OCI-LY7 (cell line): ENCODE measurements at regions of chr5 and their contacts with region 1.

Region 1: DNA sequence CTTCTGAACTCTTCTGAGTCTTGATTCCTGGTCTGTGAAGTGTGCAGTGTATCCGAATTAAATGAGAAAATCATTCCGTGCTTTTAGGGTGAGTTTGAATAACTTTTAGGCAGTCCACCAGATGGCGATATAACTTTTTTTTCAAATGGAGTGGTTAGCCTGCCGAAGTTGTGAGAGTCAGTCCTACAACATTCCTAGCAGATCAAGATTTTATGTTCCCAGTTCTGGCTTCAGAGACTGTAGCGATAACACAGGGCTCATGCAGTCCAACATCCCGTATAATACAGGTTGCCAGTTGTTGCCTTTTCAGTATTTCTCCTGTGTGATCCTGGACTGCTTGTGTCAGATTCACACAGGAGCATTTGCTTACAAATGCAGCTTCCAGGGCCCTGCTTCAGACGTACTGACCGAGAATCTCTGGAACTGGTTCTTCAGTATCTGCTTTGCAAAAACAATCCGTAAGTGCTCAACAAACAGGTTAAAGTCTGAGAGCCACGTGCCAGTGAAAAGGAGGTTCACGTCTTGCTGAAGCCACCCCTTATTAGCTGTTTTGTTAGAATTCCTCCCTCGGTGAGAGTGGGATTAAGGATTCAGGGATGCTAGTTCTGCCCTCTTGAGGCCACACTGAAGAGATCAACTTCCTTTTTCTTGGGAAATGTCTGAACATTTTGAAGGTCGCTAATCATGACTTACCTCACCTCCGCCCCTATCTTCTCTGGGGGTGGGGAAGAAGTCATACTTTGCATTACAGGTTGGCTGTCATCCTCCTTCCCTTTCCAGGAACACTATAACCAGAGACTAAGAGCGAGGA is 22.8 kb downstream of the SMIM3 start:
- DNase-seq: peak; percentile 49
- H3K4me3 ChIP-seq: no peak overlapping the region
- H3K27ac ChIP-seq: no peak overlapping the region
- H3K4me1 ChIP-seq: no peaks in the 10 kb centered on the region
- CTCF ChIP-seq: peak; percentile 81

Region 2: DNA sequence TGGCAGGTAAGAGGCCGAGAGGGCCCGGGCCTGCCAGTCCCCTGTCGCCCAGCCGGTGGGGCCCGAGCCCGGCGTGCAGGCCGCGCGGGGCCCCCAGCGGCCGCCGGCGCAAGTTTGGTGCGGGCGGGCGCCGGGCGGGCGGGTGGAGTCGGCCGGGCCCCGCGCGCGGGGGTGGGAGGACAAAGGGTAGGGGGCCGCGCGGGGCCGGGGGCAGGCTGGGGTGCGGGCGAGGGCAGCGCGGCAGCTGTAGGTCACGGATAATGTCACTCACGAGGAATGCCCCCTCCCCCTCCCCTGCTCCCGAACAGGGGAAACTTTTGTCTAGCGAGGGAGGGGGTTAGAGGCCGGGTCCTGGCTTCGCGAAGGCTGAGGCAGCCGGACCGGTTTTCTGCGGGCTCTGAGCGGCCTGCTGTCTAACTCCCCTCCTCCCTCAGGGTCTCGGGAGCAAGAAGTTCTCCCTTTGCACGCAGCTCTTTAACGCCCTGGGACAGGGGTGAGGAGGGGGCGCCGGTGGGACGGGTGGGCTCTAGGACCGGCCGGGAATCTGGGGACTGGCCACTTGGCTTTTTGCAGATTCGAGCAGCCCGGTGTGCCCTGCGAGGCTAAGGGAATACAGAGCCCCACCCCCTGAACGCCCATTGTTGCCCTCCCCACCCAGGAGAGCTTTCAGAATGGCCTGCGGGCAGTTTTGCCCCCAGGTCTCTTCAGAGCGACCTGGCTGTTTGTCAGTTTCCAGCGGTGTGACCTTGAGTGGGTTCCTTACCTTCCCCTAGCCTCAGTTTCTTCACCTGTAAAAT is 314.7 kb before region 1 on chr5:
- CTCF ChIA-PET with region 1: no interaction called
- POLR2A ChIA-PET with region 1: no interaction called
- intact Hi-C with region 1: no loop called
- DNase-seq: peak; percentile 79
- H3K4me3 ChIP-seq: peak overlapping the region; percentile 92
- H3K27ac ChIP-seq: peak overlapping the region; percentile 73
- H3K4me1 ChIP-seq: peaks cover 57% of the 10 kb centered on the region
- CTCF ChIP-seq: no peak

Region 3: GRCh38 chr5:150846654-150847333 is 45.5 kb after region 1 on chr5:
- CTCF ChIA-PET with region 1: no interaction called
- POLR2A ChIA-PET with region 1: interaction called, 3 read pairs
- intact Hi-C with region 1: loop called (anchors 1 kb)
- DNase-seq: peak; percentile 77
- H3K4me3 ChIP-seq: no peak overlapping the region
- H3K27ac ChIP-seq: no peak overlapping the region
- H3K4me1 ChIP-seq: peaks cover 5% of the 10 kb centered on the region
- CTCF ChIP-seq: peak; percentile 81

Region 4: GRCh38 chr5:151115274-151115905 is 314.1 kb after region 1 on chr5:
- CTCF ChIA-PET with region 1: no interaction called
- POLR2A ChIA-PET with region 1: no interaction called
- intact Hi-C with region 1: loop called (anchors 5 kb)
- DNase-seq: peak; percentile 72
- H3K4me3 ChIP-seq: no peak overlapping the region
- H3K27ac ChIP-seq: no peak overlapping the region
- H3K4me1 ChIP-seq: peaks cover 9% of the 10 kb centered on the region
- CTCF ChIP-seq: peak; percentile 99

Region 5: GRCh38 chr5:151315998-151316597 is 514.8 kb after region 1 on chr5:
- CTCF ChIA-PET with region 1: no interaction called
- POLR2A ChIA-PET with region 1: no interaction called
- intact Hi-C with region 1: loop called (anchors 1 kb)
- DNase-seq: peak; percentile 72
- H3K4me3 ChIP-seq: no peak overlapping the region
- H3K27ac ChIP-seq: no peak overlapping the region
- H3K4me1 ChIP-seq: peaks cover 6% of the 10 kb centered on the region
- CTCF ChIP-seq: peak; percentile 98